Activated CD8-positive, alpha-beta T cell treated with anti-CD3 and anti-CD28 coated beads for 36 hours (primary cell): ENCODE measurements at regions of chr12 and their contacts with region 1.

Region 1: DNA sequence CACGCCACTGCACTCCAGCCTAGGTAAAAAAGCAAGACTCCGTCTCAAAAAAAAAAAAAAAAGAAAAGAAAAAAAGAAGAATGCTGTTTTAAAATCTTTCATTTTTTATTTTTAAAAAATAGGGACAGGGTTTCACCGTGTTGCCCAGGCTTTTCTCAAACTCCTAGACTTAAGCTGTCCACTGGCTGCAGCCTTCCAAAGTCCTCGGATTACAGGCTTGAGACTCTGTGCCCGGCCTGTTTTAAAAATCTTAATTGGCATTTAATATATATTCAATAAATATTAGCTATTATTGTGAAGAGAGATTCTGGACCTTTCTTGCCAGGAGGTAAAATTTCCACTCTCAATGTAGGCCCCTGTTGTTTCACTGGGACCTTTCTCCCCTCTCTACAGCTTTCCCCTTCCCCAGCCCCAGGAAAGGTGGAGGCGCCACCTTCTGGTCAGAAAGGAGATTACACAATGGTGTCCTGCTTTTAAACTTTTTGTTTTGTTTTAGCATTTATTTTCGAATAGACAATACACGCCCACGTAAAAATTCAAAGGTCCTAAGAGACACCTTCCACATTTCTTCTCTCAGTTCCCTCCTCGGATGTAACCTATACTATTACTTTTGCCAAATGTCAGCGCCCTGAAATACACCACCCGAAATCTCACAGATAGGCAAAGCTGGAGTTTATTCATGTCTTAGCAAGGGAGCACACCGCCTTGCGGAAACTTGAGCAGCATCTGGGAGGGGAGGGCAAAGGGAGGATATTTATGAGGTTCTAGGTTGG is 23.8 kb upstream of the PHC1 start:
- DNase-seq: peak; percentile 66
- ATAC-seq: peak; percentile 88
- H3K4me3 Mint-ChIP-seq: peak overlapping the region; percentile 75
- H3K27ac Mint-ChIP-seq: peak overlapping the region; percentile 21
- H3K4me1 Mint-ChIP-seq: peaks cover 13% of the 10 kb centered on the region
- H3K27me3 Mint-ChIP-seq: no peaks in the 10 kb centered on the region
- CTCF ChIP-seq: peak; percentile 96

Region 2: GRCh38 chr12:8681041-8681902 is 209.2 kb before region 1 on chr12:
- CTCF ChIA-PET with region 1: interaction called, 27 read pairs
- POLR2A ChIA-PET with region 1: no interaction called
- intact Hi-C with region 1: loop called (anchors 5 kb)
- DNase-seq: no peak
- ATAC-seq: no peak
- H3K4me3 Mint-ChIP-seq: no peak overlapping the region
- H3K27ac Mint-ChIP-seq: no peak overlapping the region
- H3K4me1 Mint-ChIP-seq: no peaks in the 10 kb centered on the region
- H3K27me3 Mint-ChIP-seq: no peaks in the 10 kb centered on the region
- CTCF ChIP-seq: no peak

Region 3: GRCh38 chr12:8860165-8860961 is 30.1 kb before region 1 on chr12:
- CTCF ChIA-PET with region 1: interaction called, 15 read pairs
- POLR2A ChIA-PET with region 1: no interaction called
- intact Hi-C with region 1: no loop called
- DNase-seq: peak; percentile 50
- ATAC-seq: peak; percentile 58
- H3K4me3 Mint-ChIP-seq: no peak overlapping the region
- H3K27ac Mint-ChIP-seq: no peak overlapping the region
- H3K4me1 Mint-ChIP-seq: no peaks in the 10 kb centered on the region
- H3K27me3 Mint-ChIP-seq: no peaks in the 10 kb centered on the region
- CTCF ChIP-seq: peak; percentile 69

Region 4: GRCh38 chr12:8914716-8915526 is 24.4 kb after region 1 on chr12:
- CTCF ChIA-PET with region 1: interaction called, 21 read pairs
- POLR2A ChIA-PET with region 1: no interaction called
- intact Hi-C with region 1: no loop called
- DNase-seq: peak; percentile 68
- ATAC-seq: peak; percentile 85
- H3K4me3 Mint-ChIP-seq: no peak overlapping the region
- H3K27ac Mint-ChIP-seq: no peak overlapping the region
- H3K4me1 Mint-ChIP-seq: peaks cover 14% of the 10 kb centered on the region
- H3K27me3 Mint-ChIP-seq: no peaks in the 10 kb centered on the region
- CTCF ChIP-seq: no peak

Region 5: DNA sequence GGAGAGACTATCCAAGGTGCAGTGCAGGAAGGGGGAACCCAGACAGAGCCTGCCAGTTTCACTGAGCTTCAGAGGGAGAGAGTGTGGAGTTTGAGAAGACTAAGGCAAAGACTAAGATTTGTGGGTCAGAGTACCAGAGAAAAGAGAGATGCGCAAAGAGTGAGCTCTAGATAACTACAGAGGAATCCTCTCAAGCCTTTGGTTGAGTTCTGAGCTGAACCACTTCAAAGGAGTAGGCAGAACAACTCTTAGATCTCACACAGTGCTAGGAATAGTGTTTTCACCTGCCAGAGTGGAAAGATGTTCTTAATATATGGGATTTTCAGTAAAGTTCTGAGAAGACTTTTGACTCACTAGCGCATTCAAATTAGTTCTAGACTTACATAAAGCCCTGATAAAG is 69.7 kb after region 1 on chr12:
- CTCF ChIA-PET with region 1: no interaction called
- POLR2A ChIA-PET with region 1: no interaction called
- intact Hi-C with region 1: no loop called
- DNase-seq: no peak
- ATAC-seq: peak; percentile 80
- H3K4me3 Mint-ChIP-seq: no peak overlapping the region
- H3K27ac Mint-ChIP-seq: peak overlapping the region; percentile 2
- H3K4me1 Mint-ChIP-seq: peaks cover 52% of the 10 kb centered on the region
- H3K27me3 Mint-ChIP-seq: no peaks in the 10 kb centered on the region
- CTCF ChIP-seq: no peak

Region 6: DNA sequence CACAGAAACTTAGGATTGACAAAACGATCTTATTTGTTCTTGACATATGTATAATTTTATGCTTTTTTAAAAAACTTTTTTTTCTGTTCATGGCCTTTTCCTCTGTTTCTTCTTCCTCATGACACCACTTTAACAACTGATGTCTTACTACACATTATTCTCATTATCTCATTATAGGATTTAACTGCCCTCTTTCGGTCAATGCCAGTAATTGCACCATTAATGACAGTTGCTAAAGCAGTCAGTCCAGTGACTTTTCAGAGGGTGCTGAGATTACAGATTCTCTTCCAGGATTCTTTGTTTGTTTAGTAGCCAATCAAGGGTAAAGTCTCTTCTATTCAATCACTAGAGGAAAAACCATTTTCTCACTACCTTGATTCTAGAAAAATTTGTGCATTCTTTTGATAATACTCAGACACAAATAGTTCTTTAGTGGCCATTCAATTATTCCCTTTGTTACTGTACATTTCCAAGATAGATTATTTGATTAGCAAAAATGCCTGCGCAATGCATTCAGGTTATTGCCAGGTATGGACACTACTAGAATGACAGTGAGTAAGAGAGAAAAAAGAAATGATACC is 149.0 kb after region 1 on chr12:
- CTCF ChIA-PET with region 1: interaction called, 14 read pairs
- POLR2A ChIA-PET with region 1: no interaction called
- intact Hi-C with region 1: no loop called
- DNase-seq: no peak
- ATAC-seq: peak; percentile 87
- H3K4me3 Mint-ChIP-seq: no peak overlapping the region
- H3K27ac Mint-ChIP-seq: peak overlapping the region; percentile 53
- H3K4me1 Mint-ChIP-seq: peaks cover 52% of the 10 kb centered on the region
- H3K27me3 Mint-ChIP-seq: no peaks in the 10 kb centered on the region
- CTCF ChIP-seq: peak; percentile 89